ENCODE measurements at regions of chr5 and their contacts with region 1.

Region 1: GRCh38 chr5:32585446-32586275 is at the start of gene SUB1:
- DNase-seq: peak; percentile 97
- H3K4me3 ChIP-seq: peak within 1 kb of the TSS; percentile 89 to 97 (median 92)
- H3K27ac ChIP-seq: peak within 1 kb of the TSS; percentile 98 to 100 (median 99)
- H3K4me1 ChIP-seq: peaks cover 0 to 21% (median 14%) of the 10 kb centered on the region in 4 donors
- H3K27me3 ChIP-seq: no peaks in the 10 kb centered on the region
- CTCF ChIP-seq: no peak
- EP300 ChIP-seq: peak in 1 of 4 donors; percentile 58
- POLR2A ChIP-seq: peak; percentile 59 to 78
- total RNA-seq, gene SUB1: 84.0 to 165 (median 113) TPM

Region 2: GRCh38 chr5:32232441-32233219 is 353.0 kb before region 1 on chr5:
- intact Hi-C with region 1: loop called (anchors 5 kb)
- DNase-seq: peak; percentile 86
- H3K4me3 ChIP-seq: no peak overlapping the region
- H3K27ac ChIP-seq: peak overlapping the region; percentile 70 to 76 (median 74)
- H3K4me1 ChIP-seq: peaks cover 0 to 42% (median 32%) of the 10 kb centered on the region in 4 donors
- H3K27me3 ChIP-seq: no peaks in the 10 kb centered on the region
- CTCF ChIP-seq: peak; percentile 70 to 90 (median 76)
- EP300 ChIP-seq: no peak
- POLR2A ChIP-seq: no peak

Region 3: DNA sequence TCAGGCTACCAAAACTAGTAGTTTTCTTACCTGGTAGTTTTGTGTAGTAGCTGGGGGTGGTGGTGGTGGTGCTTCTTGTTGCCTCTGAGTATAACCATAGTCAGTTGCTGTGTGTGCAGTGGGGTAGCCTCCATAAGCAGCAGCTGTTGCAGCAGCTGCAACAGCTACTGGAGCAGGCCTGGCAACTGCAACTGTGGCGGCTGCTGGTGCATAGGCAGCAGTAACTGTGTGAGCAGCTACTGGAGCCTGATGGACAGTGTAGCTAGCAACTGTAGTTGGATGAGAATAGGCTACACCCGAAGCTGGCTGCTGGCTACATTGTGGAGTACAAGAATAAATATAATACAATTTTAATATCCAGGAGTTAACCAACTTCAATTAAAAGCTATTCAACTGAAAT is 165.9 kb before region 1 on chr5:
- intact Hi-C with region 1: loop called (anchors 10 kb)
- DNase-seq: no peak
- H3K4me3 ChIP-seq: no peak overlapping the region
- H3K27ac ChIP-seq: no peak overlapping the region
- H3K4me1 ChIP-seq: peaks cover 0 to 47% (median 24%) of the 10 kb centered on the region in 4 donors
- H3K27me3 ChIP-seq: no peaks in the 10 kb centered on the region
- CTCF ChIP-seq: no peak
- EP300 ChIP-seq: no peak
- POLR2A ChIP-seq: no peak

Region 4: GRCh38 chr5:32489791-32490582 is 95.7 kb before region 1 on chr5:
- intact Hi-C with region 1: loop called (anchors 1 kb)
- DNase-seq: peak; percentile 91
- H3K4me3 ChIP-seq: no peak overlapping the region
- H3K27ac ChIP-seq: peak overlapping the region in 1 of 4 donors; percentile 14
- H3K4me1 ChIP-seq: peaks cover 0 to 8% (median 1%) of the 10 kb centered on the region in 4 donors
- H3K27me3 ChIP-seq: no peaks in the 10 kb centered on the region
- CTCF ChIP-seq: peak; percentile 70 to 76 (median 72)
- EP300 ChIP-seq: no peak
- POLR2A ChIP-seq: no peak